Activated CD4-positive, alpha-beta T cell treated with anti-CD3 and anti-CD28 coated beads for 36 hours (primary cell): ENCODE measurements at regions of chr3 and their contacts with region 1.

Region 1: GRCh38 chr3:119463171-119464169 is at the start of gene TMEM39A:
- DNase-seq: peak; percentile 99
- ATAC-seq: peak; percentile 89
- H3K4me3 Mint-ChIP-seq: peak within 1 kb of the TSS; percentile 99
- H3K27ac Mint-ChIP-seq: peak within 1 kb of the TSS; percentile 91
- H3K4me1 Mint-ChIP-seq: peaks cover 41% of the 10 kb centered on the region
- H3K27me3 Mint-ChIP-seq: no peaks in the 10 kb centered on the region
- total RNA-seq, gene TMEM39A: 24.5 to 30.5 TPM

Region 2: DNA sequence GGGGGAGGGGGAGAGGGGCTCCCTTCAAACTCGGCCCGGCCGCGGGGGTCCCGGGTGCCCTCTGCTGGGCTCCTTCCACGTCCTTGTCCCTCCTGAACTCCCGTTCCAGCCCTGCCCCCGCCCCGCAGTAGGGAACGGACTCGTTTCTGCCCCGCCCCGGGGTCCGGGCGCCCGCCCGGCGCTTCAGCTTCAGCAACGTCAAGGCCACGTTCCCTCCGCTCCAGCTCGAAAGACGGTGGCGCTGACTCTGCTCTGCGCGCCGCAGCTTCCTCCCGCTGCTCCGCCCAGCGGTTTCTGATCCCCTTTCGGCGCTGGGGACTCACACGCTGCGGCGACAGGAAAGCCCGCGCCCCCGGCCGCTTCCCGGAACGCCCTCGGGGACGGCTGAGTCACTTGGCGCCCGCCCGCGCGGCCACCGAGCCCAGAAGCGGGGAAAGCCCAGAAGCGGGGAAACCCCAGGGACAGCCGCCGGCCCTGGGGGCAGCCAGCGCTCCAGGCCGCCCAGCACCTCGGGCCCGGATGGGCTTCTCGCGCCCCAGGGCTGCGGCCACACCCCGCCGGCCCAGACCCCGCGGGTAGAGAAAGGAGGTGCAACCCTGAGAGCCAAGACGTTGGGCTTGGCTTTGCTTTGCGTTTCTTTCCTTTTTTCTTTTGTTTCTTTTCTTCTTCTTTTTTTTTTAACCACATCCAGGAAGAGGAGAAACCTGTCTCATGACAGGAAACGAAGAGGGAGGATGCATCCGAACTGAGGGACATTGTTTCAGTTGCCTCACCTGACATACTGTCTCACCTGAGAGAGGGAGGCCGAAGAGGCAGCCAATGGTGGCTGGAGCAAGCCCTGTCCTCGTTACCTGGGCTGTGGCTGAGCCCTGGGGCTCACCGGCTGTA is 140.4 kb before region 1 on chr3:
- CTCF ChIA-PET with region 1: no interaction called
- POLR2A ChIA-PET with region 1: interaction called, 4 read pairs
- intact Hi-C with region 1: loop called (anchors 1 kb)
- DNase-seq: peak; percentile 97
- ATAC-seq: peak; percentile 92
- H3K4me3 Mint-ChIP-seq: peak overlapping the region; percentile 83
- H3K27ac Mint-ChIP-seq: peak overlapping the region; percentile 87
- H3K4me1 Mint-ChIP-seq: peaks cover 46% of the 10 kb centered on the region
- H3K27me3 Mint-ChIP-seq: no peaks in the 10 kb centered on the region

Region 3: DNA sequence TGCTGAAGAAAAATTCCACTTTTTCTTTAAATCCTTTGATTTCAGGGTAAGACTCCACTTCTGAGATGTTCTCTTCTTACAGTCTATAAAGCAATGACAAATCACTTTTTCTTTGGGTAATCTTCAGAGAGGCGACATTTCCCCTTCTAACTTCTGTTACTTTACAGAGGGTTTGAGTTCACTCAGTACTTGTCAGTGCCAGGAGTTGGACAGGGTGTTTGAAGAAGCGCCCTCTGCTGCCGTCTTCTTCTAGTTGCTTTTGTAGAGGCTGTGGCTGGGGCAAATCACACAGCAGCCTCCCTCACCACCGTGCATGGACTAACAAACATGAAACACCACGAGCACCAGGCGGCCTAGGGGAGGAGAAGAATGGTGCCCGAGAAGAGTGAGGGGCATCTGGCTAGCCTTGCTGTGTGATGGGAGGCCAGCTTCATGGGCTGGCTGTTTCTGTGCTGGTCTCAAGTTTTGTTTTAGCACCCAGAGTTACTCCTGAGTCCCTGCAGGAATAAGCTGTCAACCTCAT is 96.0 kb after region 1 on chr3 and contains the start of gene CD80:
- CTCF ChIA-PET with region 1: interaction called, 3 read pairs
- POLR2A ChIA-PET with region 1: no interaction called
- intact Hi-C with region 1: loop called in 1 of 2 experiments (anchors 1 kb)
- DNase-seq: peak; percentile 81
- ATAC-seq: peak; percentile 88
- H3K4me3 Mint-ChIP-seq: no peak within 1 kb of the TSS
- H3K27ac Mint-ChIP-seq: peak within 1 kb of the TSS; percentile 15
- H3K4me1 Mint-ChIP-seq: peaks cover 13% of the 10 kb centered on the region
- H3K27me3 Mint-ChIP-seq: no peaks in the 10 kb centered on the region
- total RNA-seq, gene CD80: 0.74 to 1.2 TPM

Region 4: GRCh38 chr3:120596116-120596852 is 1132.8 kb after region 1 on chr3 and contains the start of gene NDUFB4:
- CTCF ChIA-PET with region 1: no interaction called
- POLR2A ChIA-PET with region 1: no interaction called
- intact Hi-C with region 1: loop called in 1 of 2 experiments (anchors 5 kb)
- DNase-seq: peak; percentile 98
- ATAC-seq: peak; percentile 94
- H3K4me3 Mint-ChIP-seq: no peak within 1 kb of the TSS
- H3K27ac Mint-ChIP-seq: peak within 1 kb of the TSS; percentile 94
- H3K4me1 Mint-ChIP-seq: peaks cover 10% of the 10 kb centered on the region
- H3K27me3 Mint-ChIP-seq: no peaks in the 10 kb centered on the region
- total RNA-seq, gene NDUFB4: 157 to 186 TPM